ENCODE measurements at regions of chr3 and their contacts with region 1.

Region 1: DNA sequence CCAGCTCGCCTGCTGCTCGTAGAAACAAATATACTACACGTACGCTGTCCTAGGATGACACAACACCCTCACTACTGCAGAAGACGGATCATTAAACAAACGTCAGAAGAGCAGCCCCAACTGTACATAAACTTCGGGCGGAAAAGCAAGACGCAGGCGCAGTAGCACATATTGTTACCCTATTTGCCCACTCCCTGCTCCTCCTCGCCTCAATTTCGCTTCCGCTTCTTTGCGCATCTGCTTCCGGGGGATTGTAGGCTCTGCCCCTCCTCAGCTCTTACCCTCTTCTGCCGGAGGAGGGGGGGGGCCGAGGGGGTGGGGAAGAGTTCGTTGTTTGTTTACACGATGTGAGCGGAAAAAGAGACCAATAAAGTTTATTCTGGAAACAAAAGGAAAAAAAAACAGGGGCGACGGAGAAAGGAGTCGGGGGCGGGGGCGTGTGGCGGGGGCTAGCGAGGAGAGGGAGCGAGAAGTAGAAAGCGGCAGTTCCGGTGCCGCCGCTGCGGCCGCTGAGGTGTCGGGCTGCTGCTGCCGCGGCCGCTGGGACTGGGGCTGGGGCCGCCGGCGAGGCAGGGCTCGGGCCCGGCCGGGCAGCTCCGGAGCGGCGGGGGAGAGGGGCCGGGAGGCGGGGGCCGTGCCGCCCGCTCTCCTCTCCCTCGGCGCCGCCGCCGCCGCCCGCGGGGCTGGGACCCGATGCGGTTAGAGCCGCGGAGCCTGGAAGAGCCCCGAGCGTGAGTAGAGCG is at the start of gene PIK3CA:
- H3K4me3 Mint-ChIP-seq: no peak within 1 kb of the TSS
- H3K27ac Mint-ChIP-seq: no peak within 1 kb of the TSS
- H3K4me1 Mint-ChIP-seq: peaks cover 22% of the 10 kb centered on the region
- H3K27me3 Mint-ChIP-seq: peaks cover 7% of the 10 kb centered on the region

Region 2: GRCh38 chr3:178947738-178948137 is 200.3 kb before region 1 on chr3:
- intact Hi-C with region 1: no loop called
- H3K4me3 Mint-ChIP-seq: no peak overlapping the region
- H3K27ac Mint-ChIP-seq: no peak overlapping the region
- H3K4me1 Mint-ChIP-seq: no peaks in the 10 kb centered on the region
- H3K27me3 Mint-ChIP-seq: no peaks in the 10 kb centered on the region

Region 3: GRCh38 chr3:179181021-179181472 is 33.0 kb after region 1 on chr3:
- intact Hi-C with region 1: loop called (anchors 2 kb)
- H3K4me3 Mint-ChIP-seq: no peak overlapping the region
- H3K27ac Mint-ChIP-seq: no peak overlapping the region
- H3K4me1 Mint-ChIP-seq: peaks cover 16% of the 10 kb centered on the region
- H3K27me3 Mint-ChIP-seq: no peaks in the 10 kb centered on the region

Region 4: DNA sequence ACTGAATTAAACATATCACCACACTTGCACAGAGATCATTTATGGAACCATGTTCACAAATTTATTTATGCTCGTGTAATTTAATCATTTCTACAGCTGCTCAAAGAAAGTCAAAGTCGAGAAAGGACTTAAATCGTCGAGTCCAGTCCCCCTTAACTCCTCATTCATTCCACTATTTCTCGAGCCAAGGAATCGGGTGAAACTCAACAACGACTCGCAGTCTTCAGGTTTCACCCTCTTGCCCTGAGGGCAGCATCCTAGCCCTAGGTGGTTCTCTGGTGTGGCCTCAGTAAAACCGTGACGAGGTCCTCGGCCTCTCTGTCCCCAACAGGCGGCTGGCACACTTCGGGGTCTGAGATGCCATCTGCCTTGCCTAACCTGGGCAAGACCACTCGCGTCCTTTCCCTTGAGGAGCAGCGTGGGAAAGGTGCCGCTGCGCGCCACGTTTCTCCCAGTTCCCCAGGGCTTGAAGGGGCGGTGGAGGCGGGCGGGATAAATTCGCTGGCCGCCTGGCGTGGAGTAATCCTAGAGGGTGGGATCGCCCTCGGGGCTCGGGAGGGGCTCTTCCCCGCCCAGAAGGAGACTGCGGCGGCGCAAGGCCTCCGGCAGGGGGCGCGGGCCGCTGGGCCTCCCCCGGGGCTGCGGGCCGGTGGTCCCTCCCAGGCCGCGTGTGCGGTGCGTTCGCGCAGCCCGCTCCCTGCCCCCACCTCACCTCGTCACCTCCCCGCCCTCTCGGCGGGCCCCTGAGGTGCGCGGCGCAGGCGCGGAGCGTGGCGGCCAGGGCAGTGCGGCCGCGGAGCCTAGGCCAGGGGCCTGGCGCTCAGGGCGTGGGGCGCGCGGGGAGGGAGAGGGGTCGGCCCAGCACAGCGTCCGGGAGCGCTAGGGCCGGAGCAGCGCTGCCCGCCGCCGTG is 174.5 kb after region 1 on chr3 and contains the start of gene ZNF639:
- intact Hi-C with region 1: loop called (anchors 2 kb)
- H3K4me3 Mint-ChIP-seq: peak within 1 kb of the TSS; percentile 83
- H3K27ac Mint-ChIP-seq: peak within 1 kb of the TSS; percentile 89
- H3K4me1 Mint-ChIP-seq: peaks cover 31% of the 10 kb centered on the region
- H3K27me3 Mint-ChIP-seq: no peaks in the 10 kb centered on the region

Region 5: DNA sequence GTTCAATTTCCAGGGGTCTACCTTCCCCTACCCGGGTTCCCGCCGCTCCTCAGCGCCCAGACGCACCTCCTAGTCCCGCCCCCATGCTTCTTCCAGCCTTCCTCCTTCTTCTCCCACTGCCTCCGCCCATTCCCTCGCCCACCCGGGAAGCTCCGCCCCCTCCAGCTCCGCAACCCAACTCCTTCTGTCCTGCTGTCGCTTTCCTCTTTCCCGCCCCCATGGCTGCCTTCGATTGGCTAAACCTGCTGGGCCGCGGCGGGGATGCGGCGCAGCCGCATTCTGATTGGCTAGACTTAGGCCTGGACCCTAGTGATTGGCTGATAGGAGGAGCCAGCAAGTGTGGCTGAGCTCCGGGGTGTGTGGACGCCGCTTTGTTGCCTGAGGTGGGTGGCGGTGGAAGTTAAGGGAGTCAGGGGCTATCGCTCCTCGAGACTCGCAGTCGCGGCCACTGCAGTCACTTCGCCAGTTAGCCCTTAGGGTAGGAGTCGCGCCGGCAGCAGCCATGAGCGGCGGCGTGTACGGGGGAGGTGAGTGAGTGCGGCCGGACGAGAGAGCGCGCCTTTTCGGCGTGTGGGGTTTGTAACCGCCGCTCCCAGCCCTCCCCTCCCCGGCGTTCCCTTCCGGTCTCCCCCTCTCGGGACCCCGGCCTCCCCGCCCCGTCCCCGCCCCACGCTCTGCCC is 414.7 kb after region 1 on chr3 and contains the start of gene ACTL6A:
- intact Hi-C with region 1: loop called (anchors 2 kb)
- H3K4me3 Mint-ChIP-seq: peak within 1 kb of the TSS; percentile 94
- H3K27ac Mint-ChIP-seq: peak within 1 kb of the TSS; percentile 88
- H3K4me1 Mint-ChIP-seq: peaks cover 21% of the 10 kb centered on the region
- H3K27me3 Mint-ChIP-seq: no peaks in the 10 kb centered on the region

Region 6: GRCh38 chr3:180601688-180602666 is 1453.9 kb after region 1 on chr3 and contains the start of gene TTC14:
- intact Hi-C with region 1: loop called (anchors 5 kb)
- H3K4me3 Mint-ChIP-seq: peak within 1 kb of the TSS; percentile 85
- H3K27ac Mint-ChIP-seq: peak within 1 kb of the TSS; percentile 92
- H3K4me1 Mint-ChIP-seq: peaks cover 12% of the 10 kb centered on the region
- H3K27me3 Mint-ChIP-seq: peaks cover 24% of the 10 kb centered on the region

Measured in dendritic cell treated with granulocyte-macrophage colony-stimulating factor and Interleukin-4, amounts not matched to agents 40 ng/mL and 50 ng/mL, for 4 days (primary cell).